Heart right ventricle (tissue), 16 donors: ENCODE measurements at regions of chr9 and their contacts with region 1.

Region 1: GRCh38 chr9:91589101-91589553 is 165.5 kb upstream of the NFIL3 start:
- DNase-seq: peak in 1 of 2 donors; percentile 36
- ATAC-seq: peak; percentile 16 to 77 (median 46)
- H3K4me3 ChIP-seq: no peak overlapping the region
- H3K27ac ChIP-seq: no peak overlapping the region
- H3K4me1 ChIP-seq: no peaks in the 10 kb centered on the region
- H3K27me3 ChIP-seq: peaks cover 0 to 3% (median 0%) of the 10 kb centered on the region in 7 donors
- CTCF ChIP-seq: no peak

Region 2: DNA sequence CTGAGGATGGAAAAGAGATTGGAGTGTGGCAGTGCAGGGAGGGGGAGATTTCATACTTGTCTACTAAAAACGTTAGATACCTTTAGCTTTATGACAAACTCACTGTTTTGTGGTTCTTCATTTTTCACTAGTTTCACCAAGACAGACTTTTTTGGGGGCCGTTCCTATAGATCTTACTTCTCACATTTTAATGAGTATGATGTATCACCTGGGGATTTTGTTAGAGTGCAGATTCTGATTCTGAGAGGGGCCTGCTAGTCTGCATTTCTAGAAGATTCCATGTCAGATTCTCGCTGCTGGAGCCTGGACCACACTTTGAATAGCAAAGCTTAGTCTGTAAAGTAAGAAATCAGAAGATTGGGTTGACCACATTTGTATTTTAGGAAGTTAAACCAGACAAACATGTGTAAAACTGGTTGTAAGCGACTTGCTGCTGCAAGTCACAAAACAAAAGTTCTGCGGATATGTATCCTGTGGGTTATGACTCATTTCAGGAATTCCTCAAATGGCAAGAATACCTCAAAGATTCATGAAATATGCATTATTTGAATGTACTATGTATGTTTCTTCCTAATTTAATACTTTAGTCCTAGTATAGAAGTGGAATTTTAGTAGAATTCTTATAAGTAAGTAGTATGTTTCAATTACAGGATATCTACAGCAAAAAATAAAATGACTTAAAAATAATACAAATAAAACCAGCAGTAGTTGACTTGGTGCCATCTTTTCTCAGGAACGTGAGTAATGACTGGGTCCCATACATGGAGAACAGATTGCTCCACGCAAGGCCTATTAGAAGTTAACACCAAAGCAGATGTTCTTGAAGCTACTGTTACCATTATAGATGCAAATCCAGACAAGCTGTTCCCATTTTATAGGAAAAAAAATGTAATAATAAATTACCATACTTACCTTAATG is 193.3 kb before region 1 on chr9:
- intact Hi-C with region 1: no loop called
- DNase-seq: no peak
- ATAC-seq: no peak
- H3K4me3 ChIP-seq: no peak overlapping the region
- H3K27ac ChIP-seq: peak overlapping the region in 1 of 10 donors; percentile 33
- H3K4me1 ChIP-seq: peaks cover 0 to 24% (median 0%) of the 10 kb centered on the region in 9 donors
- H3K27me3 ChIP-seq: no peaks in the 10 kb centered on the region
- CTCF ChIP-seq: no peak

Region 3: GRCh38 chr9:91647371-91647770 is 58.2 kb after region 1 on chr9:
- intact Hi-C with region 1: loop called in 1 of 10 experiments (anchors 10 kb)
- DNase-seq: no peak
- ATAC-seq: no peak
- H3K4me3 ChIP-seq: no peak overlapping the region
- H3K27ac ChIP-seq: no peak overlapping the region
- H3K4me1 ChIP-seq: peaks cover 0 to 3% (median 0%) of the 10 kb centered on the region in 9 donors
- H3K27me3 ChIP-seq: peaks cover 0 to 7% (median 0%) of the 10 kb centered on the region in 7 donors
- CTCF ChIP-seq: no peak

Region 4: DNA sequence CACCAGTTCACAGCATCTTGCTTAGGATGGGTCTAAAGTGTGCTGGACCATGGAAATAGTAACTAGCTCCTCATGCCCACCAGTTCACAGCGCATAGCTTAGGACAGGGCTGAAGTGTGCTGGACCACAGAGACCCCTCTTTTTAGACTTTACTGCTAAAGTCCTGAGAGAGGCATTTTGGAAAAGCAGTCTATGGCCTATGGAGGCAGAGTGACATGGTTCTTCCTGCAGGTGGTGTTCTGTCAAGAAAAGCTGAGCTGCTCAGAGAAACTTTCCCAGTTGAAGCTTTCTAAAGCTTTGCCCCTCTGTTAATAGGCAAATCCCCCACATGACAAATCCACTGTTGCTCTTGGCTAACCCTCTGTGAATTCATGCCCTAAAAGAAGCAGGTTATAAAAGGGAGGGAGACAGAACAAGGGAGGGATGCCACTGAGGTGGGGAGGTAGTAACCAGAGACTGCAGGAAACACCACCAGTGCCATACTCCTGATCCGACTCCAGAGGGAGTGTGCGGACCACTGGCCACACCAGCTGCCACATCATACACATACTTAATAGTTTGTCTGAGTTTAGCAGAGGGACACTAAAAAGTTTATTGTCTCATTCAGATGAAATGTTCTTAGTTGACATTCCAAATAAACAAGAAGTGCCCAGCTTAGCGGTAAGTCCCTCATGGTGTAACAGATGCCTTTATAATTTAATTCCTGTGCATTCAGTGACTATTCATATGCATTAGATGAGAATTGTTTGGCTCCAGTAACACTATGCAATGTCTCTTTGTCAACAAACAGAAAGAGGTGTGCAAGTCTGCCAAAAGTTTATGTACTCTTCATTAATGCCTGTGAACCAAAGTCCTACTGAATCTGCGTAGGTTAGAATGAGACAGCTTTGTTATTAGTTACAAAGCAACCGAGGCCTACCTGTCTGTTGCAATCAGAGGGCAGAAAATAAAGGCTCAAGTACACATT is 70.7 kb after region 1 on chr9:
- intact Hi-C with region 1: loop called in 1 of 10 experiments (anchors 10 kb)
- DNase-seq: no peak
- ATAC-seq: no peak
- H3K4me3 ChIP-seq: no peak overlapping the region
- H3K27ac ChIP-seq: no peak overlapping the region
- H3K4me1 ChIP-seq: no peaks in the 10 kb centered on the region
- H3K27me3 ChIP-seq: no peaks in the 10 kb centered on the region
- CTCF ChIP-seq: peak in 5 of 9 donors; percentile 11 to 37 (median 25)

Region 5: DNA sequence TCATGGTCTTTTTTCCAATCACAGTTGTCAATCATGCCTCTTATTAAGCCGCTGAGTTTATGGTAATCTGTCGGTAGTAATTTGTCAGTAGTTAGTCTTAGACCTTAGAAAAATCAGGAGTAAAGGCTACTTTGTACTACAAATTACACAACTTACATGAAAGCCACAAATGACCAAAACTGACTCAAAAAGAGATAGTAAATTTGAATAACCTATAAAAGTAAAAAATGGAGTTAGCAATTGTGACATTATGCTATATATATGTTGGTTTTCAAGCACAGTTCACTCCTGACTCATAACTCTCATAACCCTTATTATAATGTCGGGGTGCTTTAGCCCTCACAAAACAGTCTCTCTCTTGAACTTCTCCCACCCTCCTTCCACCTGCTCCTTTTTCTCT is 109.1 kb after region 1 on chr9:
- intact Hi-C with region 1: no loop called
- DNase-seq: no peak
- ATAC-seq: no peak
- H3K4me3 ChIP-seq: no peak overlapping the region
- H3K27ac ChIP-seq: no peak overlapping the region
- H3K4me1 ChIP-seq: no peaks in the 10 kb centered on the region
- H3K27me3 ChIP-seq: no peaks in the 10 kb centered on the region
- CTCF ChIP-seq: no peak